ENCODE measurements at regions of chrX and their contacts with region 1.

Region 1: DNA sequence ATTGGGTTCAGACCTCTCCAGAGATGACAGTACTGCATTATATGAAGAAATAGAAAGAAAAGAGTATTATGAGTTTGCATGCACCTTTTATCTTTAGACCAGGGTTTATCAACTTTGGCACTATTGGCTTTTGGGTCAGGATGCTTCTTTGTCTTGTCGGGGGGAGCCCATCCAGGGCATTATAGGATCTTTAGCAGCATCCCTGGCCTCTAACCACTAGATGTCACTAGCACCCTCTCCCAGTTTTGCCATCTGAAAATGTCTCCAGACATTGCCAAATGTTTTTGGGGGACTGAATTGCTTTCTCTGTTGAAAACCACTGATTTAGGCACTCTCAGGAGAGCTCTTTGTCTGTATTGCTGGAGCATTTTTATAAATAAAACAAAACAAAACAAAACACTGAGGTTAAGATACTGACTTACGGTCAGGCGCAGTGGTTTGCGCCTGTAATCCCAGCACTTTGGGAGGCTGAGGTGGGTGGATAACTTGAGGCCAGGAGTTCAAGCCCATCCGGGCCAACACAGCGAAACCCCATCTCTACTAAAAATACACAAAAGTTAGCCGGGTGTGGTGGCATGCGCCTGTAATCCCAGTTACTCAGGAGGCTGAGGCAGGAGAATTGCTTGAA is 23.6 kb downstream of the CA5B start:
- DNase-seq: no peak
- H3K4me3 Mint-ChIP-seq: no peak overlapping the region
- H3K27ac Mint-ChIP-seq: peak overlapping the region; percentile 40
- H3K4me1 Mint-ChIP-seq: peaks cover 14% of the 10 kb centered on the region
- H3K27me3 Mint-ChIP-seq: no peaks in the 10 kb centered on the region

Region 2: DNA sequence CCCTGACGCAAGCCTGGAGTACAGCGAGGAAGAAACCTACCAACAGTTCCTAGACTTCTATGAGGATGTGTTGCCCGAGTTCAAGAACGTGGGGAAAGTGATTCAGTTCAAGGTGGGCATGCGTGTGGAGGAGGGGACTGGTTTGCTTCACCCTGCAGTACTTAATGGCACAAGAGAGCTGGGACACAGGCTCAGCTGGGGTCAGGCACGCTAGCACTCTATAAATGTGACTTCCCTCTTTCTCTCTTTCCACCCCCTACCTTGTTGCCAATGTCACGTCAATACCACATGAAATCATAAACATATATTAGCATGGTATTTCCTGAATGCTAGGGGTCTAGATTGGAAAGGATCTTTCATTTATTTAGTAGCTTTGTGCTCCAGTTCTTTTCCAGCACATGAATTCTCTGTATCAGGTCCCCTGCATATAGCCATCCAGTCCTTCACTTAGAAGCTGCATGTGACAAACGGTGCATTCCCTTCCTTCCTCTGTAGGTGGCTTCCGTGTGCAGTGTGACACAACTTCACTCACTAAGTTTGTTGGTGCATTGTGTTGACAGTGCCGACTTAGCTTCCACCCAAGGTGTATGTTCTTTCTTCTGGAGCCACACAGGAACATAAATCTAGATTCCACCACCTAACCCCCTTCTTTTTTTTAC is 54.2 kb after region 1 on chrX:
- intact Hi-C with region 1: loop called (anchors 5 kb)
- DNase-seq: peak; percentile 8
- H3K4me3 Mint-ChIP-seq: no peak overlapping the region
- H3K27ac Mint-ChIP-seq: peak overlapping the region; percentile 58
- H3K4me1 Mint-ChIP-seq: peaks cover 47% of the 10 kb centered on the region
- H3K27me3 Mint-ChIP-seq: no peaks in the 10 kb centered on the region

Region 3: DNA sequence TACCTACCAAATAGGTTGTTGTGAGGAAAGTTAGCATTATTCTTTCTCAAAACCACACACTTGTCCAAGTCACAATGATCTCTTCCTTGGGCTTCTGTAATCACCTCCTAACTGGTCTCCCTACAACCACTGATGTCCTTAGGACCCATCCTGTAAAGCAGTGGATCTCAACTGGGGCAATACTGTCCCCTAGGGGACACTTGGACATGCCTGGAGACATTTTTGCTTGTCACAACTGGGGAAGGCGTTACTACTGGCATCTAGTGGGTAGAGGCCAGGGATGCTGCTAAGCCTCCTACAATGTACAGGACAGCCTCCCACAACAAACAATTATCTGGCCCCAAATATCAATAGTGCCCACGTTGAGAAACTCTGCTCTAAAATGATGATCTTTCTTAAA is 211.6 kb after region 1 on chrX:
- intact Hi-C with region 1: loop called (anchors 1 kb)
- DNase-seq: no peak
- H3K4me3 Mint-ChIP-seq: no peak overlapping the region
- H3K27ac Mint-ChIP-seq: no peak overlapping the region
- H3K4me1 Mint-ChIP-seq: no peaks in the 10 kb centered on the region
- H3K27me3 Mint-ChIP-seq: no peaks in the 10 kb centered on the region

Region 4: DNA sequence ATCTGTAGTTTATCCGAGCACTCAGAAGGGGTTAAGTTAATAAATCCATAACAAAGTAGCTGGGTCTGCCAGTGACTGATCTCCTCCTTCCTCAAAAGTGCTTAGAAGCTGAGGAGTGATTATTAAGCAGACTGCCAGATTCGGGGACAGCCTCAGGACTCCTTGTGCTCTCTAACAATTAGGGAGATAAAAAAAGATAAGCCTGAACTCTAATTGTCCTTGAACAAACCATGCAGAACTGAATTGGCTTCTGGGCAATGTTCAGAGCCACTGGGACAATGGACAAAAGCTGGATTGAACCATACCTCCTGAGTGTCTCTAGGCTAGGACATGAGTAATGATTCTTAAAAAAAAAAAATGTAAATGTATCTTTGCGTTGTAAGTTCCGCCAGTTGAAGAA is 339.0 kb after region 1 on chrX:
- intact Hi-C with region 1: no loop called
- DNase-seq: no peak
- H3K4me3 Mint-ChIP-seq: no peak overlapping the region
- H3K27ac Mint-ChIP-seq: no peak overlapping the region
- H3K4me1 Mint-ChIP-seq: no peaks in the 10 kb centered on the region
- H3K27me3 Mint-ChIP-seq: peaks cover 1% of the 10 kb centered on the region

Region 5: GRCh38 chrX:16445166-16445752 is 683.6 kb after region 1 on chrX:
- intact Hi-C with region 1: loop called (anchors 2 kb)
- DNase-seq: peak; percentile 4
- H3K4me3 Mint-ChIP-seq: no peak overlapping the region
- H3K27ac Mint-ChIP-seq: no peak overlapping the region
- H3K4me1 Mint-ChIP-seq: no peaks in the 10 kb centered on the region
- H3K27me3 Mint-ChIP-seq: peaks cover 4% of the 10 kb centered on the region

Region 6: GRCh38 chrX:16695079-16695676 is 933.5 kb after region 1 on chrX:
- intact Hi-C with region 1: loop called (anchors 10 kb)
- DNase-seq: peak; percentile 25
- H3K4me3 Mint-ChIP-seq: no peak overlapping the region
- H3K27ac Mint-ChIP-seq: no peak overlapping the region
- H3K4me1 Mint-ChIP-seq: no peaks in the 10 kb centered on the region
- H3K27me3 Mint-ChIP-seq: no peaks in the 10 kb centered on the region